Activated CD4-positive, alpha-beta memory T cell treated with anti-CD3 and anti-CD28 coated beads, Interleukin-2, amount 10 ng/mL, durations not matched to agents 7 days and 5 days (primary cell): ENCODE measurements at regions of chr16 and their contacts with region 1.

Region 1: GRCh38 chr16:75647492-75648264 is at the starts of genes KARS1 and TERF2IP:
- DNase-seq: peak; percentile 96
- H3K4me3 Mint-ChIP-seq: peak within 1 kb of the TSS; percentile 95
- H3K27ac Mint-ChIP-seq: peak within 1 kb of the TSS; percentile 99
- H3K4me1 Mint-ChIP-seq: peaks cover 67% of the 10 kb centered on the region
- H3K27me3 Mint-ChIP-seq: no peaks in the 10 kb centered on the region
- total RNA-seq, gene KARS1: 169 to 170 TPM
- total RNA-seq, gene TERF2IP: 92.7 to 96.2 TPM

Region 2: GRCh38 chr16:75464130-75464918 is 183.4 kb before region 1 on chr16 and contains the start of gene TMEM170A:
- CTCF ChIA-PET with region 1: interaction called, 14 read pairs
- POLR2A ChIA-PET with region 1: interaction called, 19 read pairs
- DNase-seq: peak; percentile 99
- H3K4me3 Mint-ChIP-seq: peak within 1 kb of the TSS; percentile 90
- H3K27ac Mint-ChIP-seq: peak within 1 kb of the TSS; percentile 92
- H3K4me1 Mint-ChIP-seq: peaks cover 42% of the 10 kb centered on the region
- H3K27me3 Mint-ChIP-seq: no peaks in the 10 kb centered on the region
- total RNA-seq, gene TMEM170A: 30.8 to 33.9 TPM

Region 3: DNA sequence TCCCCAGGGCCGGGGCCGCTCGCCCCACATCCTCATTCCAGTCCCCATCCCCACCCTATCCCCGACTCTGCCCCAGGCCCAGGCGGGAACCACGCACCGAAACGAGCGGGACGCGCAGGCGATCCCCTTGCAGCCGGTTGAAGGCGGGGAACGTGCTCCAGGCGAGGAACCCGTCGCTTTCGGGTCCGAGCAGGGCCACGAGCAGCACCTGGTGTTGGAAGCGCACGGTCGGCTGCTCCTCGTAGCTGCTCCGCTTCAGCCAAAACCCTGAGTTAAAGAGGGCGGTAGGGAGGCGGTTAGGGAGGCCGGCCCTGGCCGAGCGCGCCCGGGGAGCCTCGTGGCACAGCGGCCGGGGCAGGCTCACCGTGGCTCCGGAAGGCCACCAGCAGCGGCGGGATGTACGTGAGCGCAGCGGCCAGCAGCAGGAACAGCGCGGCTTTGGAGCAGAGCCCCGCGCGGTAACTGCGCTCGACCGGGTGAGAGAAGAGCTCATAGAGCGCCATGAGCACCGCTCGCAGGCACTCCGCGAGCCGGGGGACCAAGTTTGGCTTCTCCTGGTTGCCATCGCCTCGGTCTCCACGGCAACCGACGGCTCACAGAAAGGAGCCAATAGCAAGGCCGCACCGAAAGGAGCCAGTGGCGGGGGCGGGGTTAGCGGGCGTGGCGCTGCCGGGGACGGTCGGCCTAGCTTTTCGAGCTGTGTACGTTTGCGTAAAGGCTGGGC is 91.8 kb before region 1 on chr16 and contains the start of gene TMEM231:
- CTCF ChIA-PET with region 1: interaction called, 5 read pairs
- POLR2A ChIA-PET with region 1: interaction called, 10 read pairs
- DNase-seq: peak; percentile 98
- H3K4me3 Mint-ChIP-seq: peak within 1 kb of the TSS; percentile 86
- H3K27ac Mint-ChIP-seq: peak within 1 kb of the TSS; percentile 71
- H3K4me1 Mint-ChIP-seq: peaks cover 23% of the 10 kb centered on the region
- H3K27me3 Mint-ChIP-seq: peaks cover 5% of the 10 kb centered on the region
- total RNA-seq, gene TMEM231: 1.9 to 2.0 TPM

Region 4: GRCh38 chr16:75622761-75623605 is 24.7 kb before region 1 on chr16 and contains the start of gene ADAT1:
- CTCF ChIA-PET with region 1: interaction called, 30 read pairs
- POLR2A ChIA-PET with region 1: interaction called, 184 read pairs
- DNase-seq: peak; percentile 99
- H3K4me3 Mint-ChIP-seq: peak within 1 kb of the TSS; percentile 92
- H3K27ac Mint-ChIP-seq: peak within 1 kb of the TSS; percentile 94
- H3K4me1 Mint-ChIP-seq: peaks cover 69% of the 10 kb centered on the region
- H3K27me3 Mint-ChIP-seq: no peaks in the 10 kb centered on the region
- total RNA-seq, gene ADAT1: 50.7 to 56.0 TPM

Region 5: GRCh38 chr16:75660726-75661302 is 13.1 kb after region 1 on chr16:
- CTCF ChIA-PET with region 1: interaction called, 3 read pairs
- POLR2A ChIA-PET with region 1: interaction called, 32 read pairs
- DNase-seq: no peak
- H3K4me3 Mint-ChIP-seq: no peak overlapping the region
- H3K27ac Mint-ChIP-seq: no peak overlapping the region
- H3K4me1 Mint-ChIP-seq: peaks cover 3% of the 10 kb centered on the region
- H3K27me3 Mint-ChIP-seq: no peaks in the 10 kb centered on the region

Region 6: DNA sequence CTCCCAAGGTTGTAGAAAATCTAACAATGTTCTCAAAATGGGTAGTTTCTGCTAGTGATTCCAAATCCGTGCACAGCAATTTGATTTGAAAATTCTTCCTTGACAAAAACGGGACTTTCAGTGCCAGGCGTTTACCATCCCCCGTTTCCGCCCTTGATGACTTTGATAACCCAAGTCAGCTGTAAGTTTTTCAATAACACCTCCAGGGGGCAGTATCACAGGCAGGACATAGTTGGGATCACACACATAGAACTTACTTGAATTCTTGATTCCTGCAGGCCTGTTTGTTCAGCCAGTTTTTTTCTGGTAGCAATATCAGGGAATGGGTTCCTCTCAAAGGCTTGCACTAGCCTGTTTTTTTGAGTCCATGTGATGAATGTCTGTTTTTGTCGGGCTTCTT is 48.0 kb after region 1 on chr16:
- CTCF ChIA-PET with region 1: no interaction called
- POLR2A ChIA-PET with region 1: no interaction called
- DNase-seq: no peak
- H3K4me3 Mint-ChIP-seq: no peak overlapping the region
- H3K27ac Mint-ChIP-seq: no peak overlapping the region
- H3K4me1 Mint-ChIP-seq: no peaks in the 10 kb centered on the region
- H3K27me3 Mint-ChIP-seq: no peaks in the 10 kb centered on the region